ENCODE measurements at regions of chr17 and their contacts with region 1.

Region 1: DNA sequence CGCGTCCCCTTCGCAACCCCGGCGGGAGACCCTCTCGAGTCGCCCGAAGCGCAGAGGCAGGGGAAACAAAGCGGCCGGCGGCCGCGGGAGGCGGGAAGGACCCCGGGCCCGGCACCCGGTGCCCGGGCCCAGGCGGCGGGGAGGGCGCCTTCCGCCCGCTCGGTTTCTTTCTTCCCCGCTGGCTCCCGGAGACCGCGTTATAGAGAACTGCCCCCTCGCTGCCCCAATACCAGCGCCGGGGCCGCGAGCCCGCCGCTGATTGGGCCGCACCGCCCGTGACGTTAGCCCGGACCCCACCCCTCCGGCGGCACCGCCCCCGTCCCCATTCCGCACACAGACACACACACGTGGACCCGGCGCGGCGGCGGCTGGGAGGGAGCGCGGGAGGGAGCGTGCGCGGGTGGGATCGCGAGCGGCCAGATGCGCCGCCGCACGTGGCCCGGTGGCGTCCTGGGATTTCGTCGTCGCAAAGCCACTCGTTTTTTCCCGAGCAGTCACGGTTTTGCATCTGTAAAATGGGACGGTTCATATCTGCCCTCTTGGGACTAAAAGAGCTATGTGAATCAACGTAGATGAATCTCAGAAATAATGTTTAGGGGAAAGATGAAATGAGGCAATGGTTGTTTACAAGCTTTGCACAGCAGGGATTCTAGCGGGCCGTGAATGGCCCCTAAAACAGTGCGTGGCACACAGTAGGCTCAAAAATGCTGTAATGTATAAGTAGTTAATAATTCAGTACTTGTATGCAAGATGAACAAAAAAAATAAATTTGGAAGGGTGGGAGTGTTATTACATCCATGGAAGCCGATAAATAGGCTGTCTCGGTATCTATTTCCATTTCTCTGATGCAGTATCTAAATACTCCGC is at the start of gene EPOP:
- DNase-seq: peak; percentile 89
- H3K4me3 ChIP-seq: peak within 1 kb of the TSS; percentile 76
- H3K27ac ChIP-seq: no peak within 1 kb of the TSS
- H3K4me1 ChIP-seq: peaks cover 36% of the 10 kb centered on the region
- H3K27me3 ChIP-seq: peaks cover 58% of the 10 kb centered on the region
- CTCF ChIP-seq: peak; percentile 12
- total RNA-seq, gene EPOP: 0.33 TPM

Region 2: GRCh38 chr17:38605888-38606645 is 68.9 kb before region 1 on chr17 and contains the start of gene SRCIN1:
- intact Hi-C with region 1: no loop called
- DNase-seq: peak; percentile 62
- H3K4me3 ChIP-seq: peak within 1 kb of the TSS; percentile 69
- H3K27ac ChIP-seq: peak within 1 kb of the TSS; percentile 62
- H3K4me1 ChIP-seq: peaks cover 27% of the 10 kb centered on the region
- H3K27me3 ChIP-seq: peaks cover 92% of the 10 kb centered on the region
- CTCF ChIP-seq: peak; percentile 78
- total RNA-seq, gene SRCIN1: 2.0 TPM

Region 3: GRCh38 chr17:38735161-38735997 is 60.4 kb after region 1 on chr17:
- intact Hi-C with region 1: loop called (anchors 5 kb)
- DNase-seq: peak; percentile 68
- H3K4me3 ChIP-seq: no peak overlapping the region
- H3K27ac ChIP-seq: peak overlapping the region; percentile 97
- H3K4me1 ChIP-seq: peaks cover 63% of the 10 kb centered on the region
- H3K27me3 ChIP-seq: no peaks in the 10 kb centered on the region
- CTCF ChIP-seq: peak; percentile 89

Region 4: GRCh38 chr17:38898812-38899348 is 223.9 kb after region 1 on chr17:
- intact Hi-C with region 1: no loop called
- DNase-seq: no peak
- H3K4me3 ChIP-seq: peak overlapping the region; percentile 19
- H3K27ac ChIP-seq: peak overlapping the region; percentile 86
- H3K4me1 ChIP-seq: peaks cover 97% of the 10 kb centered on the region
- H3K27me3 ChIP-seq: no peaks in the 10 kb centered on the region
- CTCF ChIP-seq: no peak